Mammary epithelial cell (primary cell): ENCODE measurements at regions of chr6 and their contacts with region 1.

Region 1: DNA sequence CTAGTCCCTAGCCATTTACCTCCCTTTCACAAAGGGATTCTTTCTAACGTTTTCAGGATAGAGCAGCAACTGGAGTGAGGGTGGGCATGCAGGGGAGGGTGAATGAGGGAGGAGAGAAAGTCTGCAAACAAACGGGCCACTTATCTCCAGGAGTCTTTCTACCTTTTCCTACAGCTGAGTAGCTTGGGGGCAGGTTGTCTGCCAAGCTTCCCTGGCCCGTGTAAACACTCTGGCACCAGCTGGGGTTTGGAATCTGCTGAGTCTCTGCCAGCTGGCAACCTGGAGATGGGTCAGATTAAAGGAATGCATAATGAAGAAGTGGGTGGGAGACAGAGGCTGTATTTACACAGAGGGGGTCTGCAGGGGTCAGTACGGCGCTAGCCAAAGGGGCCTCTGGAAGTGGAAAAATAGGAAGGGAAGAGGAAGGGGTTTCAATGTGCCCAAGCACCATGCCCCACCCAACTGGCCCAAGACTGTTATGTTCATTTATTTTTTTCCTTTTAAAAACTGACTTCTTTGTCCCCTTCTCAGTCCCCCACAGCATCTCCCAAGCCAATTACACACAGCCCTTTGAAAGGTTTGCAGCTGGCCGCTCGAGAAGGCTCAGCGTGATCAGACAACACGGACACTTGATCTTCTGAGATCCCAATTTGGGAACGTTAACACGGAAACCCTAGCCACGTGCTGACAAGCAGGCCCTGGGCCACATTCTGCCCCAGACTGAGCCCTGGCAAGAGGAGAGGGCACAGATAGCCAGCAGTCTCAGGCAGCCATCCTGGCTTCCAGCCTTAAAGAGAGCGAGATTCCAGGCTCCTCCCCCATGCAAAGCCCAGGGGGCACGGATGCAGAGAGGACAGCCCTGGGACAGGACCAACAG is 25.2 kb downstream of the TRAM2 start:
- DNase-seq: peak; percentile 66
- H3K4me3 ChIP-seq: no peak overlapping the region
- H3K27ac ChIP-seq: no peak overlapping the region
- H3K4me1 ChIP-seq: peaks cover 36% of the 10 kb centered on the region
- H3K27me3 ChIP-seq: no peaks in the 10 kb centered on the region
- CTCF ChIP-seq: no peak

Region 2: DNA sequence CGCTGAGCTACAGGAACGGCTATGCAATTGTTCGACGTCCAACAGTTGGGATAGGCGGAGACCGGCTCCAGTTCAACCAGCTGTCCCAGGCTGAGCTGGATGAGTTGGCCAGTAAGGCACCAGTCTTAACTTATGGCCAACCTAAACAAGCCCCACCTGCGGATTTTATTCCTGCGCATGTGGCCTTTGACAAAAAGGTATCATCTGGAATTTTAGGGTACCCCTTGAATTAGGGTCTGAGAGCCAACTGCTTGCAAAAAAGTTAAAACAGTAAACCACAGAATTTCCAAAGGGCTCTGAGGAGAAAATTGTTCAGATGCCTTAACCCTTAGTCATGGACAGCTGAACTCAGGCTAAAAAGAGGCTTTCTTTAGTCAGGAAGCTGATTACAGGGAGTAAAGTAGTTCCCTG is 127.7 kb before region 1 on chr6:
- CTCF ChIA-PET with region 1: no interaction called
- dilution Hi-C with region 1: no loop called
- in situ Hi-C with region 1: no loop called
- intact Hi-C with region 1: no loop called
- DNase-seq: peak; percentile 64
- H3K4me3 ChIP-seq: no peak overlapping the region
- H3K27ac ChIP-seq: peak overlapping the region; percentile 1
- H3K4me1 ChIP-seq: peaks cover 23% of the 10 kb centered on the region
- H3K27me3 ChIP-seq: no peaks in the 10 kb centered on the region
- CTCF ChIP-seq: no peak

Region 3: DNA sequence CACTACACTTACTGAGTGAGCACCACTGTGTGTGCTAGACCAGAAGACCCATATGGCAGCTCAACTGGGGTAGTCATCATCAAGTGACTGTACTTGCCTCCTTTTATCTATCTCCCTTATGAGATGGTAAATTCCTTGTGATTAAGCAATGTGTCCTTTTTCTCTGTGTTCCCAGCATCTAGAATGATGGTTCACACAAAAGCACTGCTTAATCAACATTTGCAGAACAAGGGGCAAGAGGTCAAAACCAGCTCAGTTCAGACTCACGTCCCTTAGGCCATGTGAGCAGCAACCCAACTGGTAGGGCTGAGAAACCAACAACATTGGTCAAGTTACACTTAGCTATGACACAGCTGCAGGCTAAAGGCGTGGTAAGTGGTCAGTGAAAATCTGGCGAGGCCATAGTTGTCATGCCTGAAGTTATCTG is 15.2 kb after region 1 on chr6:
- CTCF ChIA-PET with region 1: interaction called, 4 read pairs
- dilution Hi-C with region 1: no loop called
- in situ Hi-C with region 1: no loop called
- intact Hi-C with region 1: loop called (anchors 2 kb)
- DNase-seq: peak; percentile 89
- H3K4me3 ChIP-seq: no peak overlapping the region
- H3K27ac ChIP-seq: peak overlapping the region; percentile 30
- H3K4me1 ChIP-seq: peaks cover 17% of the 10 kb centered on the region
- H3K27me3 ChIP-seq: no peaks in the 10 kb centered on the region
- CTCF ChIP-seq: no peak

Region 4: DNA sequence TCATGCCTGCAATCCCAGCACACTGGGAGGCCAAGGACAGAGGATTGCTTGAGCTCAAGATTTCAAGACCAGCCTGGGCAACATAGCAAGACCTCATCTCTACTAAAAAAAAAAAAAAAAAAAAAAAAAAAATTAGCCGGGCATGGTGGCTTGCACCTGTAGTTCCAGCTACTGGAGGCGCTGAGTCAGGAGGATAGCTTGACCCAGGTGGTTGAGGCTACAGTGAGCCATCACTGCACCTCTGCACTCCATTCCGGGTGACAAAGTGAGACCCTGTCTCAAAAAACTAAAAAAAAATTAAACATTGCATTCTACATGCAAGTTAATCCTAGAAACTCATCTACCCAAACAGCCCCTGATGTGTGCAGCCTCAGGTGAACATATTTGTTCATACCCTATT is 32.6 kb after region 1 on chr6:
- CTCF ChIA-PET with region 1: interaction called, 3 read pairs
- dilution Hi-C with region 1: loop called (anchors 5 kb)
- in situ Hi-C with region 1: no loop called
- intact Hi-C with region 1: no loop called
- DNase-seq: no peak
- H3K4me3 ChIP-seq: no peak overlapping the region
- H3K27ac ChIP-seq: no peak overlapping the region
- H3K4me1 ChIP-seq: no peaks in the 10 kb centered on the region
- H3K27me3 ChIP-seq: no peaks in the 10 kb centered on the region
- CTCF ChIP-seq: no peak